ENCODE measurements at regions of chr6 and their contacts with region 1.

Region 1: GRCh38 chr6:34973547-34974248 is 84.6 kb downstream of the ANKS1A start:
- DNase-seq: no peak
- H3K4me3 ChIP-seq: no peak overlapping the region
- H3K27ac ChIP-seq: no peak overlapping the region
- H3K4me1 ChIP-seq: no peaks in the 10 kb centered on the region
- H3K27me3 ChIP-seq: no peaks in the 10 kb centered on the region
- CTCF ChIP-seq: peak in 1 of 2 donors; percentile 19

Region 2: GRCh38 chr6:34723203-34723602 is 250.5 kb before region 1 on chr6:
- CTCF ChIA-PET with region 1: no interaction called
- dilution Hi-C with region 1: no loop called
- in situ Hi-C with region 1: no loop called
- intact Hi-C with region 1: no loop called
- DNase-seq: no peak
- H3K4me3 ChIP-seq: no peak overlapping the region
- H3K27ac ChIP-seq: no peak overlapping the region
- H3K4me1 ChIP-seq: peaks cover 6% of the 10 kb centered on the region
- H3K27me3 ChIP-seq: no peaks in the 10 kb centered on the region
- CTCF ChIP-seq: no peak

Region 3: GRCh38 chr6:34934516-34934915 is 39.2 kb before region 1 on chr6:
- CTCF ChIA-PET with region 1: no interaction called
- dilution Hi-C with region 1: loop called (anchors 5 kb)
- in situ Hi-C with region 1: no loop called
- intact Hi-C with region 1: no loop called
- DNase-seq: peak; percentile 9
- H3K4me3 ChIP-seq: no peak overlapping the region
- H3K27ac ChIP-seq: no peak overlapping the region
- H3K4me1 ChIP-seq: no peaks in the 10 kb centered on the region
- H3K27me3 ChIP-seq: no peaks in the 10 kb centered on the region
- CTCF ChIP-seq: no peak

Region 4: GRCh38 chr6:35341557-35341956 is 367.9 kb after region 1 on chr6:
- CTCF ChIA-PET with region 1: no interaction called
- dilution Hi-C with region 1: no loop called
- in situ Hi-C with region 1: no loop called
- intact Hi-C with region 1: no loop called
- DNase-seq: no peak
- H3K4me3 ChIP-seq: no peak overlapping the region
- H3K27ac ChIP-seq: no peak overlapping the region
- H3K4me1 ChIP-seq: peaks cover 22% of the 10 kb centered on the region
- H3K27me3 ChIP-seq: no peaks in the 10 kb centered on the region
- CTCF ChIP-seq: no peak